ENCODE measurements at regions of chr6 and their contacts with region 1.

Region 1: GRCh38 chr6:133923938-133924593 is 29.0 kb upstream of the TBPL1 start:
- H3K4me3 Mint-ChIP-seq: no peak overlapping the region
- H3K27ac Mint-ChIP-seq: no peak overlapping the region
- H3K4me1 Mint-ChIP-seq: no peaks in the 10 kb centered on the region
- H3K27me3 Mint-ChIP-seq: peaks cover 43% of the 10 kb centered on the region

Region 2: GRCh38 chr6:133937909-133938308 is 13.8 kb after region 1 on chr6:
- intact Hi-C with region 1: no loop called
- H3K4me3 Mint-ChIP-seq: no peak overlapping the region
- H3K27ac Mint-ChIP-seq: no peak overlapping the region
- H3K4me1 Mint-ChIP-seq: no peaks in the 10 kb centered on the region
- H3K27me3 Mint-ChIP-seq: peaks cover 19% of the 10 kb centered on the region

Region 3: DNA sequence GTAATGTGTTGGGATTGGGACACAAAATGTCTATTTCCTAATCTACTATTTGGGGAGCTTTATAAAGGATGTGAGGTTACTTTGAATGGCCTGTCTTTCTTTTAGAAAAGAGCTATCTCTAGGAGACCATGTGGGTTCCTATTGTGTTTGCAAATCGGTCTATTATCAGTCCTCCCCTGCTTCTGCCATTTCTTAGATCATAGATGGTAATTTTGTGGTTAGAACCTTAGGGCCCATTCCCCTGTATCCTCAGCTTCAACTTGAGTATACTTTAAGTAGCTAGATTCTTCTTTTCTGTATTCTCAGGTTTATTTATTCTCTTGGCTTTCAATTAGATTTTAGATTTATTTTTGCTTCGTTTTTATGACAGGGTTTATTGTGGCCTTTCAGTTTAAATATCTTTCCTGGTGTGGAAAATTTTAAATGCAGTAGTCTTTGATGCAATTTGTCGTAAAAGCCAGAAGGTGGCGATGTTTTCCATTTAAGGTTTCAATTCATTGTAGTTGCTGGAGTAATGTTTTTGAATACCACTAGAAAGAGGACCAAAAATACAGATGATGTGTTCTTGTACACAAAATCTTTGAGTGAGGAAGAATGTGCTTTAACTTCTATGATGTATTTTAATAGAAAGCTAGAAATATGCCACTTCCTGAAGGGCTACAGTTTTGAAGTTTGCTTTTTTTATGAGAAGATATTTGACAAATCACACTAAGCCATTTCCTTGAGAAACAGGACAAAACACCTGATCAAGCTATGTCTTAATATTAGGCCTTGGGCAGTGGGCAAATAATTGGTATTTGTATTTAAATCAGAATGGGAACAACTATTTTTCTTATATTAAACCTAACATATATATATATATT is 49.3 kb after region 1 on chr6:
- intact Hi-C with region 1: loop called (anchors 2 kb)
- H3K4me3 Mint-ChIP-seq: no peak overlapping the region
- H3K27ac Mint-ChIP-seq: no peak overlapping the region
- H3K4me1 Mint-ChIP-seq: peaks cover 17% of the 10 kb centered on the region
- H3K27me3 Mint-ChIP-seq: no peaks in the 10 kb centered on the region

Region 4: GRCh38 chr6:134063966-134064445 is 139.9 kb after region 1 on chr6:
- intact Hi-C with region 1: loop called (anchors 1 kb)
- H3K4me3 Mint-ChIP-seq: no peak overlapping the region
- H3K27ac Mint-ChIP-seq: no peak overlapping the region
- H3K4me1 Mint-ChIP-seq: no peaks in the 10 kb centered on the region
- H3K27me3 Mint-ChIP-seq: no peaks in the 10 kb centered on the region